HCT116 (cell line): ENCODE measurements at regions of chr3 and their contacts with region 1.

Region 1: DNA sequence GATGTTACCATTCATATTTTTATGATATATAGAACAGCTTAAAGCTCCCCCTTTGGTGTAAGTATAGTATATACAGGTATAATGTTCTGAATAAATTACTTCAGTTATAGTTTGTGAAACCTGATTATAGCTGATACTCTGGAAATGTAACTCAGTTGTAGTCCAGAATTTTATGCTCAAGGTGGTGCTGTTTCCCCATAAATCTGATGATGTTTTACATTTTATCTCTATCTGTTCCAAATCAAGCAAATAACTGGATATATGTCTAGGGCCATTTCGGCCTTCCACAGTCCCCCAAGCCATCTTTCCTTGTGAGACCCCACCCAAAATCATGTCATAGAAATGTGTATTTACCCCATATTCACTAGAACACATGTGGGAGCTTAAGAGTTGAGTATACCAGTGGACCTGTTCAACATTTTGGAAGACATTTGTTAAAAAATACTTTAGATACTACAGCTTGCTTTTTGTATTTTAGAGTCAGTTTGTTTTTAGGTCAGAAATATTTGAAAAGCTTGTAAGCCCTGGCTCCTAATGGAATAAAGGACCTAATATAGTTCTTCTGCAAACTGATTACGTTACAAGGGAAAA is 107.1 kb downstream of the ATG7 start:
- DNase-seq: peak; percentile 32
- ATAC-seq: peak; percentile 70
- H3K4me3 ChIP-seq: no peak overlapping the region
- H3K27ac ChIP-seq: no peak overlapping the region
- H3K4me1 ChIP-seq: no peaks in the 10 kb centered on the region
- H3K27me3 ChIP-seq: no peaks in the 10 kb centered on the region
- CTCF ChIP-seq: peak; percentile 31 to 75 (median 63); a peak in 5 of 6 replicates
- POLR2A ChIP-seq: no peak
- RAD21 ChIP-seq: peak; percentile 84

Region 2: GRCh38 chr3:11037241-11037873 is 342.0 kb before region 1 on chr3:
- CTCF ChIA-PET with region 1: no interaction called
- POLR2A ChIA-PET with region 1: no interaction called
- RAD21 ChIA-PET with region 1: no interaction called
- intact Hi-C with region 1: no loop called
- DNase-seq: no peak
- ATAC-seq: no peak
- H3K4me3 ChIP-seq: no peak overlapping the region
- H3K27ac ChIP-seq: no peak overlapping the region
- H3K4me1 ChIP-seq: no peaks in the 10 kb centered on the region
- H3K27me3 ChIP-seq: peaks cover 40% of the 10 kb centered on the region
- CTCF ChIP-seq: no peak
- POLR2A ChIP-seq: no peak
- RAD21 ChIP-seq: no peak

Region 3: GRCh38 chr3:11803977-11804892 is 424.9 kb after region 1 on chr3:
- CTCF ChIA-PET with region 1: interaction called, 10 read pairs
- POLR2A ChIA-PET with region 1: no interaction called
- RAD21 ChIA-PET with region 1: no interaction called
- intact Hi-C with region 1: loop called (anchors 1 kb)
- DNase-seq: peak; percentile 35
- ATAC-seq: peak; percentile 88
- H3K4me3 ChIP-seq: no peak overlapping the region
- H3K27ac ChIP-seq: no peak overlapping the region
- H3K4me1 ChIP-seq: no peaks in the 10 kb centered on the region
- H3K27me3 ChIP-seq: no peaks in the 10 kb centered on the region
- CTCF ChIP-seq: peak; percentile 70 to 78 (median 72)
- POLR2A ChIP-seq: no peak
- RAD21 ChIP-seq: peak; percentile 82

Region 4: GRCh38 chr3:11835028-11835639 is 455.8 kb after region 1 on chr3:
- CTCF ChIA-PET with region 1: interaction called, 4 read pairs
- POLR2A ChIA-PET with region 1: no interaction called
- RAD21 ChIA-PET with region 1: no interaction called
- intact Hi-C with region 1: loop called (anchors 5 kb)
- DNase-seq: no peak
- ATAC-seq: no peak; the same call in 1 of the 2 replicates
- H3K4me3 ChIP-seq: no peak overlapping the region
- H3K27ac ChIP-seq: no peak overlapping the region
- H3K4me1 ChIP-seq: no peaks in the 10 kb centered on the region
- H3K27me3 ChIP-seq: no peaks in the 10 kb centered on the region
- CTCF ChIP-seq: peak; percentile 33 to 61 (median 45); a peak in 5 of 6 replicates
- POLR2A ChIP-seq: no peak
- RAD21 ChIP-seq: peak; percentile 68